Heart left ventricle (tissue), 16 donors: ENCODE measurements at regions of chr12 and their contacts with region 1.

Region 1: GRCh38 chr12:105983622-105984320 is 155.0 kb downstream of the NUAK1 start:
- DNase-seq: no peak
- ATAC-seq: no peak
- H3K4me3 ChIP-seq: no peak overlapping the region
- H3K27ac ChIP-seq: no peak overlapping the region
- H3K4me1 ChIP-seq: peaks cover 0 to 17% (median 6%) of the 10 kb centered on the region in 12 donors
- H3K27me3 ChIP-seq: no peaks in the 10 kb centered on the region
- CTCF ChIP-seq: no peak
- POLR2A ChIP-seq: no peak

Region 2: GRCh38 chr12:105820429-105821140 is 163.2 kb before region 1 on chr12:
- intact Hi-C with region 1: loop called in 1 of 10 experiments (anchors 5 kb)
- DNase-seq: peak in 3 of 5 donors; percentile 15 to 51 (median 49)
- ATAC-seq: peak; percentile 81 to 89 (median 86)
- H3K4me3 ChIP-seq: no peak overlapping the region
- H3K27ac ChIP-seq: peak overlapping the region; percentile 2 to 65 (median 36)
- H3K4me1 ChIP-seq: peaks cover 0 to 37% (median 26%) of the 10 kb centered on the region in 12 donors
- H3K27me3 ChIP-seq: no peaks in the 10 kb centered on the region
- CTCF ChIP-seq: no peak
- POLR2A ChIP-seq: no peak

Region 3: DNA sequence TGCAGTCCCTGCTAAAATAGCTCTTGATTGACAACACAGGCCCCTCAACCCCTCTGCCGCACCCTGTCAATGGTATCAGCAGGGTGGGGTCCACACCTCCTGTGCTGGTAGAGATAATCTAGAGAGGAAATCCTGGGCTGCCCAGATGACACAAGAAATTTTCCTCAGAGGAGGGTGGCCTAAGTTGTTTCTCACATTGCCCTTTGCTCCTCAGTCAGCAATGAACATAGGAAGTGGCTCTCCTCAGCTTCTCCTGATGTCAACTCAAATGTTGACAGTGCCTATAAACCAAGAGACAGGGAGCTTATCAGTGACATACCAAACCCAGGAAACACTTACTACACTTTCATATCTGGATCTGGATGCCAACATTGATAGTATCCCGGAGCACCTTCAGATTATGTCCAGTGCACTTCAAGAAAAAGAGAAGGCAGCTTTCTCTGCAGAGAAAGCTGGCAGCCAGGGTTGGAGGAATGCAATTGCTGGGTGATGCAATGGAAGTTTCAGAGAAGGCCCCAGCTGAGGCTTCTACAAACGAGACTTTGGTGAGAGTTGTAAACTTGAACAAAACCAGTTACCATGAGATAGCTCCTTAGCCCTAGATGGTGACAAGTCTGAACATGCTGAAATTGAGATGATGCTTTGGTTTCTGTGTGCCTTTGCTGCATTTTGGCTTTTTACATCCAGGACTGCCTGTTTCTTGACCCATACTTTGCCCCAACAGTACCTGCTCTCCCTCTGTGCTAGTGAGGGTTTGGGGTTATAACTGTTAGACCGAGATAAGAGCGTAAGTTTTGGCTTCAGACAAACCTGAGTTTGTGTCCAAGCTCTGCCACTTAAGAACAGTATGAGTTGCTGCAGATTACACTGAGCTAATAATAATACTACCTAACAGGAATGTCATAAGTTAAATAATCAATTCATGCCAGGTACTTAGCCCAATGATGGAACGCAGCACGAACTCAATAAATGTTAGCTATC is 28.5 kb before region 1 on chr12:
- intact Hi-C with region 1: loop called in 1 of 10 experiments (anchors 1 kb)
- DNase-seq: no peak
- ATAC-seq: peak in 1 of 4 donors; percentile 67
- H3K4me3 ChIP-seq: no peak overlapping the region
- H3K27ac ChIP-seq: peak overlapping the region in 6 of 12 donors; percentile 8 to 59 (median 19)
- H3K4me1 ChIP-seq: peaks cover 0 to 36% (median 6%) of the 10 kb centered on the region in 12 donors
- H3K27me3 ChIP-seq: no peaks in the 10 kb centered on the region
- CTCF ChIP-seq: no peak
- POLR2A ChIP-seq: no peak

Region 4: GRCh38 chr12:106022568-106023012 is 38.8 kb after region 1 on chr12:
- intact Hi-C with region 1: loop called in 1 of 10 experiments (anchors 5 kb)
- DNase-seq: no peak
- ATAC-seq: no peak
- H3K4me3 ChIP-seq: no peak overlapping the region
- H3K27ac ChIP-seq: no peak overlapping the region
- H3K4me1 ChIP-seq: peaks cover 0 to 17% (median 14%) of the 10 kb centered on the region in 12 donors
- H3K27me3 ChIP-seq: no peaks in the 10 kb centered on the region
- CTCF ChIP-seq: no peak
- POLR2A ChIP-seq: no peak

Region 5: GRCh38 chr12:106090591-106091411 is 107.0 kb after region 1 on chr12:
- intact Hi-C with region 1: no loop called
- DNase-seq: peak in 4 of 5 donors; percentile 71 to 80 (median 73)
- ATAC-seq: peak; percentile 85 to 91 (median 90)
- H3K4me3 ChIP-seq: no peak overlapping the region
- H3K27ac ChIP-seq: peak overlapping the region; percentile 66 to 91 (median 84)
- H3K4me1 ChIP-seq: peaks cover 8 to 87% (median 56%) of the 10 kb centered on the region in 12 donors
- H3K27me3 ChIP-seq: no peaks in the 10 kb centered on the region
- CTCF ChIP-seq: no peak
- POLR2A ChIP-seq: no peak

Region 6: GRCh38 chr12:106288494-106289195 is 304.9 kb after region 1 on chr12:
- intact Hi-C with region 1: no loop called
- DNase-seq: no peak
- ATAC-seq: no peak
- H3K4me3 ChIP-seq: no peak overlapping the region
- H3K27ac ChIP-seq: no peak overlapping the region
- H3K4me1 ChIP-seq: peaks cover 0 to 20% (median 11%) of the 10 kb centered on the region in 12 donors
- H3K27me3 ChIP-seq: no peaks in the 10 kb centered on the region
- CTCF ChIP-seq: no peak
- POLR2A ChIP-seq: no peak